PC-3 (cell line): ENCODE measurements at regions of chr15 and their contacts with region 1.

Region 1: DNA sequence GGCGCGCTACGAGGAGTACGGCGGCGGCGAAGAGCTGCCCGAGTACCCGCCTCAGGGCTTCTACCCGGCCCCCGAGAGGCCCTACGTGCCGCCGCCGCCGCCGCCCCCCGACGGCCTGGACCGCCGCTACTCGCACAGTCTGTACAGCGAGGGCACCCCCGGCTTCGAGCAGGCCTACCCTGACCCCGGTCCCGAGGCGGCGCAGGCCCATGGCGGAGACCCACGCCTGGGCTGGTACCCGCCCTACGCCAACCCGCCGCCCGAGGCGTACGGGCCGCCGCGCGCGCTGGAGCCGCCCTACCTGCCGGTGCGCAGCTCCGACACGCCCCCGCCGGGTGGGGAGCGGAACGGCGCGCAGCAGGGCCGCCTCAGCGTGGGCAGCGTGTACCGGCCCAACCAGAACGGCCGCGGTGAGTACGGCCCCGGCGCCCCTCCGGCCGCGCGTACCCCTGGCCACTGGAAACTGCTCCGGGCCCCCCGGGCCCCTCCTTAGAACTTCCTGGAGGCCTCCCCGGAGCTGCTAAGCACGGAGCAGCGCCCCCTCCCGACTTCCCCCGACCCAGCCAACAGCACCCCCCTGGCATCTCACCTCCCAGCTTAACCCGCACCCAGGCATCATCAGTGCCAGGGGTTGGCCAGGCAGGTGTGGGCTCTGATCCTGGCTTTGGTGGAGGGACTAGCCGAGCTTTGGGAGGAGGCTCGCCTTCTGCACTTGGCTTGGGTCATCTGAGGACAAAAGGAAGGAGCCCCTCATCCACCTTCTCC is 1.4 kb downstream of the LOXL1 start:
- DNase-seq: peak; percentile 78
- ATAC-seq: peak; percentile 35
- H3K4me3 ChIP-seq: peak overlapping the region; percentile 90
- H3K27ac ChIP-seq: peak overlapping the region; percentile 83
- H3K4me1 ChIP-seq: peaks cover 84% of the 10 kb centered on the region
- H3K27me3 ChIP-seq: no peaks in the 10 kb centered on the region
- CTCF ChIP-seq: peak; percentile 66

Region 2: GRCh38 chr15:73856458-73857192 is 71.0 kb before region 1 on chr15:
- CTCF ChIA-PET with region 1: no interaction called
- POLR2A ChIA-PET with region 1: no interaction called
- intact Hi-C with region 1: no loop called
- DNase-seq: no peak
- ATAC-seq: no peak
- H3K4me3 ChIP-seq: no peak overlapping the region
- H3K27ac ChIP-seq: no peak overlapping the region
- H3K4me1 ChIP-seq: no peaks in the 10 kb centered on the region
- H3K27me3 ChIP-seq: peaks cover 25% of the 10 kb centered on the region
- CTCF ChIP-seq: no peak

Region 3: DNA sequence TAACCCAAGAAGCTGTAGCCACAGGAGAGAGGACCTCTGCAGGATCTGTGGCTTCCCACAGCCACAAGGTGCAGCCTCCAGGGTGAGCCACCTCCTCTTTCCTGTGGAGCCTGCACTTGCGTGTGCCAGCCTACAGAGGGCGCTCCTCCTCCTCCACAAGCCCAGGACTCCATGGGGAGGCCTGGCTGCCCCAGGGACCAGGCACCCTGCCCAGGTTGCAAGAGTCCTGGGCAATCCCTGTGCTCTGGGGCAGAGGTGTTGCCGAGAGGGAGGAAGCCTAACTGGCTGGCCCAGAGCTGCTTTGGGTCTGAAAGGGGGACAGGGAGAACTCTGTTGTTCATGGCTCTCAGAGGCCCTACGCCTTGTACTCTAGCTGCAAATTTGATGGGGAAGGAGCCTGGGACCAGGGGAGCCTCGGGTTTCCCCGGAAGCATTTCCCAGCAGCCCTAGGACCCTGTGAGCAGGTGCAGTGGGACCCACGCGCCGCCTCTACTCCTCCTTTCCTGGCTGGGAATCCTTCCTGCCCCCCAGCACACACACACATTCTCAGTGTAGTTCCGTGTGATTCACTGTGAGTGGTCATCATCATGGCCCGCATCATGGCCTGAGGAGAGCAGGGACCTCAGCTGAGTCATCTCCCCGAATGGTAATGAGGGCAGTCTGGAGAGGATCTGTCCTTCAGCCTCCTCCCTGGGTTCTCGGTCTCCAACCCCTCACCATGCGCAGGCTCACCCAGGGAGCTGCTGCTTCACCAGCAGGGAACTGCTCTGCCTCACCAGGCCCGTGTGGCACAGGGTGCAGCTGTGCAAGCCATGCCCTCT is 30.0 kb before region 1 on chr15:
- CTCF ChIA-PET with region 1: no interaction called
- POLR2A ChIA-PET with region 1: no interaction called
- intact Hi-C with region 1: loop called (anchors 1 kb)
- DNase-seq: peak; percentile 90
- ATAC-seq: peak; percentile 81
- H3K4me3 ChIP-seq: no peak overlapping the region
- H3K27ac ChIP-seq: peak overlapping the region; percentile 92
- H3K4me1 ChIP-seq: peaks cover 37% of the 10 kb centered on the region
- H3K27me3 ChIP-seq: no peaks in the 10 kb centered on the region
- CTCF ChIP-seq: peak; percentile 98